ENCODE measurements at regions of chr2 and their contacts with region 1.

Region 1: GRCh38 chr2:205680067-205680466 is 2.2 kb upstream of the NRP2 start:
- DNase-seq: peak; percentile 73
- H3K4me3 Mint-ChIP-seq: no peak overlapping the region
- H3K27ac Mint-ChIP-seq: no peak overlapping the region
- H3K4me1 Mint-ChIP-seq: peaks cover 19% of the 10 kb centered on the region
- H3K27me3 Mint-ChIP-seq: peaks cover 36% of the 10 kb centered on the region

Region 2: DNA sequence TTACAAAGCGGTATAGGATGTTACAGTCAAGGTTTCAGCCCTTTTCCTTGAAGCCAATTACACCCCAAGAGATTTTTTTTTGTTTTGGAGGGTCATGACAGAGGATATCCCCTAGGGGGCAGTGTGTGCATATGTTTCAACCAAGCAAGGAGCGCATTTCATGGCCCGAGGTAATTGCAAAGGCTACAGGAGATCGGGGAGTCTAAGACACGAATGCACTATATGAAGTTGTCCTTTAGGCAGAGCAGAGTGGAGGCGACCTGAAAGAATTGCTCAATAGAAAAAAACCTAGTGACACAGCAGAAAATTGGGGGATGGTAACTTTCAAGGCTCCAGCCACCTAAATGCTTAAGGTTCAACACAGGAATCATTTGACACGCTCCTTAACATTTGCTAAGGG is 1354.6 kb before region 1 on chr2:
- CTCF ChIA-PET with region 1: interaction called, 6 read pairs
- intact Hi-C with region 1: loop called (anchors 1 kb)
- DNase-seq: peak; percentile 74
- H3K4me3 Mint-ChIP-seq: no peak overlapping the region
- H3K27ac Mint-ChIP-seq: no peak overlapping the region
- H3K4me1 Mint-ChIP-seq: no peaks in the 10 kb centered on the region
- H3K27me3 Mint-ChIP-seq: no peaks in the 10 kb centered on the region

Region 3: GRCh38 chr2:204871231-204871953 is 808.7 kb before region 1 on chr2:
- CTCF ChIA-PET with region 1: interaction called, 15 read pairs
- intact Hi-C with region 1: loop called (anchors 1 kb)
- DNase-seq: no peak
- H3K4me3 Mint-ChIP-seq: no peak overlapping the region
- H3K27ac Mint-ChIP-seq: no peak overlapping the region
- H3K4me1 Mint-ChIP-seq: peaks cover 31% of the 10 kb centered on the region
- H3K27me3 Mint-ChIP-seq: no peaks in the 10 kb centered on the region

Region 4: DNA sequence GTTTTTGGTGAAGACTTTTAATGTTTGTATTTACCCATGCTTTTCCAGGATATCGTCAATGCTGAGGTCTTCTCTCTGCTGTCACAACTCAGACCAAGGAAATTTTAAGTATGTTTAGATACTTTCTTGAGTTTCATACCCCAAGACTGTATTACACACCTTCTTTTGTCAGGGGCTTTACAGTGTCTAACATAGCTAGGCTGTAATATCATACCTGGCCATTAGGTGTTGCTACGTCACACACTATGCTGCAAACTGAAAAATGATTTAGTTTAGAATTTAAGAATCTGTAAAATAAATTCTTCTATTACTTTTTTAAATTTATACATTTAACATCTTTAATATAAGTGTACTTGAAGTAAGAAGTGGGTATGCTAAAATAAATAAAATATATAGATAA is 356.1 kb before region 1 on chr2:
- CTCF ChIA-PET with region 1: interaction called, 6 read pairs
- intact Hi-C with region 1: loop called (anchors 1 kb)
- DNase-seq: peak; percentile 13
- H3K4me3 Mint-ChIP-seq: no peak overlapping the region
- H3K27ac Mint-ChIP-seq: no peak overlapping the region
- H3K4me1 Mint-ChIP-seq: no peaks in the 10 kb centered on the region
- H3K27me3 Mint-ChIP-seq: no peaks in the 10 kb centered on the region

Region 5: GRCh38 chr2:205596581-205596980 is 83.5 kb before region 1 on chr2:
- CTCF ChIA-PET with region 1: interaction called, 3 read pairs
- intact Hi-C with region 1: loop called (anchors 1 kb)
- DNase-seq: no peak
- H3K4me3 Mint-ChIP-seq: no peak overlapping the region
- H3K27ac Mint-ChIP-seq: no peak overlapping the region
- H3K4me1 Mint-ChIP-seq: no peaks in the 10 kb centered on the region
- H3K27me3 Mint-ChIP-seq: no peaks in the 10 kb centered on the region

Region 6: GRCh38 chr2:205800773-205801172 is 120.7 kb after region 1 on chr2:
- CTCF ChIA-PET with region 1: no interaction called
- intact Hi-C with region 1: no loop called
- DNase-seq: no peak
- H3K4me3 Mint-ChIP-seq: no peak overlapping the region
- H3K27ac Mint-ChIP-seq: no peak overlapping the region
- H3K4me1 Mint-ChIP-seq: no peaks in the 10 kb centered on the region
- H3K27me3 Mint-ChIP-seq: no peaks in the 10 kb centered on the region

Region 7: DNA sequence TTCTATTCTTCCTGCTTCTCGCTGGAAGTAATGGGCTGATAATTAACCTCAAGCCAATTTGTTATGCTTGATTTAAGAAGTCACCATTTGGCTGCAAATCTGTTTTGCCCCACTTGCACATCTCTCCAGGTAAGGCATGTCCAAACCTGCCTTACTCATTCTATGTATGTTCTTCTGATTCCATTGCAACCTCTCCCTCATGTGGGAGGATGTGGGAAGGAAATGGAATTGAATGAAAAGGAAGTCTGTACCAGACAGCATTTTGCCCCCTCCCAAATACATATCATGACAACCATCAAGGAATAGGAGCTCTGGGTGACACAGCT is 133.9 kb after region 1 on chr2:
- CTCF ChIA-PET with region 1: no interaction called
- intact Hi-C with region 1: loop called (anchors 5 kb)
- DNase-seq: no peak
- H3K4me3 Mint-ChIP-seq: no peak overlapping the region
- H3K27ac Mint-ChIP-seq: no peak overlapping the region
- H3K4me1 Mint-ChIP-seq: no peaks in the 10 kb centered on the region
- H3K27me3 Mint-ChIP-seq: peaks cover 9% of the 10 kb centered on the region

Region 8: DNA sequence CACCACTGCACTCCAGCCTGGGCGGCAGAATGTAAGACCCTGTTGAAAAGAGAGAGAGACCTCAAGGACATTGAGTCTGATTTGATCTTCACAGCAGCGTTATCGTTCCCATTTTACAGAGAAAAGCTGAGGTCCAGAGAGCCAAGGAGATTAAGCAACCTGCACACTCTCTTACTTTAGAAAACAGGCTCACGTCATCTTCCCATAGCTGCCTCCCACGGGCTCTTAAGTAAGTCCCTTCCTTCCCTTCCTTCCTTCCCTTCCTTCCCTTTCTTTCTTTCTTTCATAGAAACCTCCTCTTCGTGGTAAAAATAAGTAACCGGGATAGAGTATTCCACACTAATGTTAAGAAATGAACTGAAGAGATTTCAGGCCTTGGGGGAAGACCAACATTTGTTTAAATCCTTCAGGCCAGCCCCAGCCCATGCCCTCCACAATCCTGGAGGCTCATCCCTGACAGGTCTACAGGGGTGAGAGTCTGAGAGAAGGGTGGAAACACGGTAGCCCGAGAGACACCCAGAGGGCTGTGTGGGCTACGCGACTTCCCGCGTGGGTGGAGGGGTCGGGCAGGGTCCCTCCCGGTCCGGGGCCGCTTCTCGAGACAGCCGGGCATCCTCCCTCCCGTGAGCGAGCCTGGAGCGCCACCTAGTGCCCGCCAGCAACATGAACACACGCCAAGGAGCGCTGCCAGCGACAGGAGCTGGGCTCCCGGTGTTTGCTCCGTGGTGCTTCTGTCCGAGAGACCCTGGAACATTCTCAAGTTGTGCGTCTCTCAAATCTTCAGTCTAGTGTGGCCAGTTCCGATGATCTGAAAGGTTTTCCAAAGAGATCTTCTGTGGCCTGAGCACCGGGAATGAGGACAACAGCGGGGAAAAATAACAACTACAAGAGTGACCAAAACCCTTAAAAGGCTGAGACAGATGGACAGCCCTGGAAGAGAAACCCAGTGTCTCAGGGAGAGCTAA is 245.6 kb after region 1 on chr2:
- CTCF ChIA-PET with region 1: interaction called, 3 read pairs
- intact Hi-C with region 1: loop called (anchors 5 kb)
- DNase-seq: peak; percentile 80
- H3K4me3 Mint-ChIP-seq: peak overlapping the region; percentile 8
- H3K27ac Mint-ChIP-seq: no peak overlapping the region
- H3K4me1 Mint-ChIP-seq: peaks cover 8% of the 10 kb centered on the region
- H3K27me3 Mint-ChIP-seq: peaks cover 39% of the 10 kb centered on the region